ENCODE measurements at regions of chr13 and their contacts with region 1.

Region 1: DNA sequence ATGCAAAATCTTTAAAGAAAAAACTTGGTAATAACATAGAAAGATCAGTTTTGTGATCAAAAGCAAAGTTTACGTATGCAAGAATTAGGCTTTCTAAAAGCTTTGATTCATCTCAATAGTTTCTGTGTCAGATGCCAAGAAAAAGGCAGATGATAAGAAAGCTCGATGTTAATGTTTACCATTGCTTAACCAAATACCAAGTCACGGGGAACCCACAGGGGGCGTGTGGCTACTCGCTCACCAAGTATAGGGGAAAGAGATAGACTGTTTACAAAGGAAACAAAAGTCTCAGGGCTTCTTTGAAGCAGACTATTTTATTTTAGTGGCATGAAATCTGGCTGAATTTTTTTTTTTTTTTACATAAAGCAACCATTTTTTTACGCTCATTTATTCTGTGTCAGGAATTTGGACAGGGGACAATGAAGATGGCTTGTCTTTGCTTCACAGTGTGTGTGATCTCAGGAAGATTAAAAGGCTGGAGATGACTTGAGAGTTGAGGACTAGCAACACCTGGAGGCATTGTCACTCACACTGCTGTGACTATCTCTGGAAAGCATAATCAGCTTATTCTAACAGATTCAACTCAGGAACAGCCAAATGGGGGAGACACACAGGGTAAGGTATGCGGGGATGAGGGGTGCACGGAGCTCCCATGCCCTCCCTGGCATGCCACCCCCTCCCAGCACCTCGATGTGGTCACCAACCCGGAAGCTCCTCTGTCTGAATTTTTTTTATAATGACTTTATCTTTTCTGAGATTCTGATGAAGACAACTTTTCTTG is 24.9 kb downstream of the RCBTB1 start:
- DNase-seq: no peak
- ATAC-seq: peak; percentile 18 to 61 (median 42)
- H3K4me3 ChIP-seq: no peak overlapping the region
- H3K27ac ChIP-seq: peak overlapping the region in 7 of 10 donors; percentile 8 to 76 (median 59)
- H3K4me1 ChIP-seq: peaks cover 0 to 14% (median 4%) of the 10 kb centered on the region in 9 donors
- H3K27me3 ChIP-seq: no peaks in the 10 kb centered on the region
- CTCF ChIP-seq: peak in 6 of 9 donors; percentile 8 to 46 (median 30)

Region 2: DNA sequence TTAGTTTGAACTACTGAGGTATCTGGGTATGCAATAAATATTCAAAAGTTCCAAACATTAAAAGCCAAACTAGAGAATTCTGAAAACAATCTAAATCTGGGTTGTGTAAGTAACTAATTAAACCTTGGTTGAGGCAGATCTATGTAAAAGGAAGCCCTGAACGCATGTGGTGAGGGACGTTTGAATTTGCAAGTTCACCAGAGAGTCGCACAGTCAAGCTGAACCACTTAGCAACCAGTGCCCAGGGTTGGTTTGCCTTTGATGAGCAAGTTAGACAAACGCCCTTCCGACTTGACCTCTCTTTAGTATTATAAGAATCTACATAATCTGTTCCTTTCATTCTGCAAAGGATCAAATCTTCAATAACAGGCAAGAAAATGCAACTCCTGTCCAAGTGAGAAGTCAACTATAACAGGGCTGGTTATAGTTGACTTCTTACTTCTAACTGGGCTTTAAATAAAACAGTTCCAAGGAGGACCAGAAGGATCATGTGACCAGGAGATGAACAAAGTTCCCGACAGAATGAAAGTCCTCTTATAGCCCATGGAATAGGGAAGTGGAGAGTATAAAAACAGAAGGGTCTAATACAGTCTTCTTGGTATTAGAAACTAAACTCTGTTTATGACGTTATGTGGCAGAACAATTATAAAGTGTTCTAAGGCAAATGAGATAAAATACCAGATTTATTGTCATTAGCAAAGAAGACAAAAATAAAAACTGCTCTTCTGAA is 24.2 kb before region 1 on chr13:
- intact Hi-C with region 1: loop called in 1 of 10 experiments (anchors 2 kb)
- DNase-seq: no peak
- ATAC-seq: peak in 4 of 8 donors; percentile 24 to 57 (median 52)
- H3K4me3 ChIP-seq: no peak overlapping the region
- H3K27ac ChIP-seq: peak overlapping the region in 1 of 10 donors; percentile 16
- H3K4me1 ChIP-seq: peaks cover 0 to 25% (median 15%) of the 10 kb centered on the region in 9 donors
- H3K27me3 ChIP-seq: no peaks in the 10 kb centered on the region
- CTCF ChIP-seq: no peak

Measured in heart right ventricle (tissue), 16 donors.